ENCODE measurements at regions of chr12 and their contacts with region 1.

Region 1: GRCh38 chr12:12716793-12717585 is at the start of gene CDKN1B:
- DNase-seq: peak; percentile 94
- ATAC-seq: peak; percentile 90
- H3K4me3 ChIP-seq: peak within 1 kb of the TSS; percentile 84
- H3K27ac ChIP-seq: peak within 1 kb of the TSS; percentile 98
- H3K4me1 ChIP-seq: peaks cover 20% of the 10 kb centered on the region
- H3K27me3 ChIP-seq: no peaks in the 10 kb centered on the region
- CTCF ChIP-seq: no peak
- POLR2A ChIP-seq: peak; percentile 78
- RAD21 ChIP-seq: no peak
- total RNA-seq, gene CDKN1B: 17.4 and 28.1 TPM in 2 replicates

Region 2: DNA sequence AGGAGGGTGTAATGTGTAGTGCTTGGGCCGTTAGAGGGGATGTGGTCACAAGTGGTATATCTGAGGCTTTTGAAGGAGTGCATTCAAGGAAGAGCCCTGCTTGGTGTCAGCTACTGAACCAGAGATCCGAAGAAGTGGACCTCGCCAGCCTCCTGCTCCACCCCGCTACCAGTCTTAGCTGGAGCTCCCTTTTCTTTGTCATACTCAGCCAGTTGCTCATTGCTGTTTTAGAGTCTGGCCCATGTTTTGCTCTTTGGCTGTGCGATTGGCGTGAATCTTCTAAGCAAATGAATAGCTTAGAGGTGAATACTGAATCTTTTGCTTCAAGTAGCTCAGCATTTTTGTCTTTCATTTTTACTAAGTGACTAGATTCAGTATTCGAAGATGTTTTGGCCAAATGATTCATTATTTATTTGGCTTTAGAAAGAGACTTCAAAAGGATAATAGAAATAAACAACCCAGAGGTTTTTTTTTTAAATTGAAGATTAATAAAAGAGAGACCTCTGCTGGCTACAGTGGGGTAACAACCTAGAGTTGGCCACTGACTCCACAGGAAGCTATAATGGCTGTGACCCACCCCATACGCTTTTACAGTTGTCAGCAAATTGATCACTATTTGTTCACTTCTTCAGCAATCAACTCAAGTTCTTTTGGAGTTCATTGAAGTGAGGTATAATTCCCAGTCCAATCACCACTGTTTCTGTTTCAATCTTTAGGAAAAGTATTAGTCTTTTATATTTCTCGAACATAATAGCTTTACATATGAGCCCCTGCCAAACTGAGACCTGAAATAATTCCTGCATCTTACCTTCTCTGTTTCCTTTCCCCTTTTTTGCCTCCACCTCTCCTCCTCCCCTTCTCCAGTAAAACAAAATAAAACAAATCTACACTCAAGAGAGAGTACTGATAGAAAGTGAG is 20.0 kb after region 1 on chr12:
- CTCF ChIA-PET with region 1: interaction called, 15 read pairs
- POLR2A ChIA-PET with region 1: no interaction called
- dilution Hi-C with region 1: no loop called
- in situ Hi-C with region 1: no loop called
- intact Hi-C with region 1: no loop called
- DNase-seq: peak; percentile 85
- ATAC-seq: peak; percentile 84
- H3K4me3 ChIP-seq: peak overlapping the region; percentile 16; the same call in 1 of the 2 replicates
- H3K27ac ChIP-seq: peak overlapping the region; percentile 76
- H3K4me1 ChIP-seq: peaks cover 16% of the 10 kb centered on the region
- H3K27me3 ChIP-seq: no peaks in the 10 kb centered on the region
- CTCF ChIP-seq: peak; percentile 68
- POLR2A ChIP-seq: no peak; the same call in 1 of the 2 replicates
- RAD21 ChIP-seq: peak; percentile 49

Region 3: DNA sequence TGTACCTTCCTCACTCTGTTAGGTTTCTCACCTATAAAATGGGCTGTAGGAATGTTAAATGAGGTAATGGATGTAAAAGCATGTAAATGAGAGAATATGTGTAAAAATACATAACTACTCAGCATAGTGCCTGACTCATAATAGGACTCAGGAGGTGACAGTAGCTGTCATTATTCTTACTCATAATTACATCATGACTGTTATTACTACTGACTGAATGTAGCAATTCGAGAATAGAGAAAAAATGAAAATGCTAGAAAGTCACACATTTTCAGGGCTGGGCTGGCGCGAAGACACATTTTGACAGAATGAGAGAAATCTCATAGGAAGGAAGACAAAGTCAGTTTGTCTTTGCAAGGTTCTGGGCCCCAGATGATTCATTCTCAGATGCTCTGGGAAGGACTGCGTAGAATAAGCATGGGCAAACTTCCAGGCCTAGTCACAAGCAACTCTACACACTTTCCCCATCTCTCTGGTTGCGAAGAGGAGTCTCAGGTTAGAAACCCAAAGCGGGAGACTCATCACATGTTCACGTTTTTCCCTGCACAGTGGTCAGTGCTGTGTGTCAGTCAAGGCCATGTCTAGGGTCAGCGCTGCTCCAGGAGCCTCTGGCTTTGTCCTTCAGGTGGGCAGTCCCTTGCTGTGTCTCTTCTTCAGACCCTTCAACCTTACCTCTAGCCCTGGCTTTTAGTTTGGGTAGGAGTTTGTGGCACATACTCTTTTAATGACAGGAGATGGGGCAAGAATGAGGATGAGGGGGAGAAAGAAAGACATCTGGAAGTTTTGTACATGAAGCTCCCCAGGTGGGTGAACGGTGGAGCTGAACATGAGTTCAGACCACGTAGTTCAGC is 182.8 kb after region 1 on chr12:
- CTCF ChIA-PET with region 1: no interaction called
- POLR2A ChIA-PET with region 1: no interaction called
- dilution Hi-C with region 1: no loop called
- in situ Hi-C with region 1: no loop called
- intact Hi-C with region 1: loop called (anchors 5 kb)
- DNase-seq: peak; percentile 98
- ATAC-seq: peak; percentile 60
- H3K4me3 ChIP-seq: no peak overlapping the region
- H3K27ac ChIP-seq: peak overlapping the region; percentile 95
- H3K4me1 ChIP-seq: peaks cover 30% of the 10 kb centered on the region
- H3K27me3 ChIP-seq: no peaks in the 10 kb centered on the region
- CTCF ChIP-seq: no peak
- POLR2A ChIP-seq: no peak; the same call in 1 of the 2 replicates
- RAD21 ChIP-seq: no peak

Measured in IMR-90 (cell line).